Activated naive CD4-positive, alpha-beta T cell treated with anti-CD3 and anti-CD28 coated beads for 36 hours (primary cell): ENCODE measurements at regions of chr22 and their contacts with region 1.

Region 1: DNA sequence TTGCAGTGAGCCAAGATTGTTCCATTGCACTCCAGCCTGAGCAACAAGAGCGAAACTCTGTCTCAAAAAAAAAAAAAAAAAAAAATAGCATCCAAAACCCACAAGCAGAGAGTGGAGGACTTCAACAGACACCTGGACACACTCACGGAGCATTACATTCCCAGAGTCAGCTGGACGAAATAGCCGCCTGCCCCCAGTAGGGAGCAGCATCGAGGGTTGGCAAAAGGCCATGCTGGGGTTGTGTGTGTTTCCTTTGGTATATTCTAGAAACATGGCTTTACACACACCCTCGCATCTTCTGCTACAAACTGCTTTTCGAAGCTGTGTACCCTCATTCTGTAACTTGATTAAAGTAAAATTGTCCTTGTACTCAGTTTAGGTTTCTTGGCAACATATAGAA is 5.3 kb downstream of the ADA2 start:
- DNase-seq: peak; percentile 73
- H3K4me3 Mint-ChIP-seq: no peak overlapping the region
- H3K27ac Mint-ChIP-seq: no peak overlapping the region
- H3K4me1 Mint-ChIP-seq: peaks cover 48% of the 10 kb centered on the region
- H3K27me3 Mint-ChIP-seq: no peaks in the 10 kb centered on the region

Region 2: DNA sequence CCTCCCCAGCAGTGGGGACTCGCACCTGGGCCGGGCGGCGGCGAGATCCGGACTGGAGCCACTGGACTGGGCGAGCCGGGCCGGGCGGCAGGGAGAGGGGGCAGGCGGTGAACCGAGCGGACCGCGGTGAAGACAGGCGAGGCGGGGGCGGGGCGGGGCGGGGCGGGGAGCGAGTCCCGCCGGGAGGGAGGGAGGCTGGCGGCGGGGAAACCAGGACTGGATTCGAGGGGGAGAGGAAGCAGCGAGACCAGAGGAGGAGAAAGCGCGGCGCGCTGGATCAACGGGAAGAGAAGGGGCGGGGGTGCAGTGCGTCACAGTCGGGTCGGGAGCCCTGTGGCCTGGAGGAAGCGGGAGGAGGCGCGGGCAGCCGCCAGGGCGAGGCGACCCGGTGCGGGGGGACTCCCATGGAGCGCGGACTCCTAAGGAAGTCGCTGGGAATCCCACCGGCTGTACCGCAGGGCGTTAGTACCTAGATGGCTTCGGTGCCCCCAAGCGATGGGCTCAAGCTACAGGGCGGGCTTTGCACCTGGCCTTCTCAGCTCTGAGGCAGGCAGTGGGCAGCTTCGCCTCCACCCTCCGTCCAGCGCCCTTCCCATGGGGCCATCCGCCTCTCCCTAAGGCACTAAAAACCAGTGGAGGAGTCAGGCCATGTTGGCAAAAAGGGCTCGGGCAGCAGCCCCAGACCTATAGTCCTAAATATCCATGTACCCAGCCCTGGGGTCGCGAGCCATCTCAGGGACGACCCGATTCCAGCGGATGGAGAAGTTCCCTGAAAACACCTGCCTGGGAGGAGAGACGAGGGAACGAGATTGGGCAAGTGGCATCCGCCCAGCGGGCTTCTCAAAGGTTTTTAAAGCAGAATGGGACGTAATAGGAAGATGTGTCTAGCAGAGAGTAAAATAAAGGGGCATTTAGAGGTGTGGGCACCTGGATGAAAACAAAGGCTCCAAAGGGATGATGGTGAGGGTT is 92.5 kb before region 1 on chr22 and contains the start of gene TMEM121B:
- CTCF ChIA-PET with region 1: no interaction called
- intact Hi-C with region 1: loop called (anchors 5 kb)
- DNase-seq: peak; percentile 54
- H3K4me3 Mint-ChIP-seq: peak within 1 kb of the TSS; percentile 62
- H3K27ac Mint-ChIP-seq: no peak within 1 kb of the TSS
- H3K4me1 Mint-ChIP-seq: peaks cover 38% of the 10 kb centered on the region
- H3K27me3 Mint-ChIP-seq: peaks cover 11% of the 10 kb centered on the region
- total RNA-seq, gene TMEM121B: 0.19 to 0.22 TPM

Region 3: GRCh38 chr22:17158568-17159503 is 55.1 kb before region 1 on chr22 and contains the start of gene HDHD5:
- CTCF ChIA-PET with region 1: interaction called, 4 read pairs
- intact Hi-C with region 1: loop called (anchors 1 kb)
- DNase-seq: peak; percentile 90
- H3K4me3 Mint-ChIP-seq: peak within 1 kb of the TSS; percentile 84
- H3K27ac Mint-ChIP-seq: peak within 1 kb of the TSS; percentile 78
- H3K4me1 Mint-ChIP-seq: peaks cover 38% of the 10 kb centered on the region
- H3K27me3 Mint-ChIP-seq: no peaks in the 10 kb centered on the region
- total RNA-seq, gene HDHD5: 40.1 to 43.7 TPM

Region 4: GRCh38 chr22:17243524-17243923 is 29.5 kb after region 1 on chr22:
- CTCF ChIA-PET with region 1: no interaction called
- intact Hi-C with region 1: loop called (anchors 2 kb)
- DNase-seq: peak; percentile 43
- H3K4me3 Mint-ChIP-seq: no peak overlapping the region
- H3K27ac Mint-ChIP-seq: peak overlapping the region; percentile 61
- H3K4me1 Mint-ChIP-seq: peaks cover 10% of the 10 kb centered on the region
- H3K27me3 Mint-ChIP-seq: no peaks in the 10 kb centered on the region

Region 5: DNA sequence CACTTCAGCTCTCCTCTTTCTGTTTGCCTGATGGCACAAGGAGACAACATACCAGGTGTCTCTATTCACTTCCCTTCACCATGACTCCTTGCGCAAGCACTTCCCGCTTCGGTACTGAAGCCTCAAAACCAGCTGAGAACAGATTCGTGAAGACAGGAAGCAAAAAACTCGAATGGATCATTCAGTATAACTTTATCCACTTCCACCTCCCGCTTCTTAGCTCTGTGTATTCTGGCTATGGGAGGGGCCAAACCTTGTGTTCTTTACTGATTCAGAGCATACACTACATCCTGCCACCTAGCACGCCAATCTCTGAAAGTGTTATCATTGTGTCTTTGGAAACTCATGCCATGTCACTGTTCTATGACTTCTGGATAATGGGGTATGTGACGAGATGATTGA is 67.5 kb after region 1 on chr22:
- CTCF ChIA-PET with region 1: no interaction called
- intact Hi-C with region 1: loop called (anchors 1 kb)
- DNase-seq: peak; percentile 71
- H3K4me3 Mint-ChIP-seq: peak overlapping the region; percentile 38
- H3K27ac Mint-ChIP-seq: peak overlapping the region; percentile 79
- H3K4me1 Mint-ChIP-seq: peaks cover 15% of the 10 kb centered on the region
- H3K27me3 Mint-ChIP-seq: no peaks in the 10 kb centered on the region

Region 6: DNA sequence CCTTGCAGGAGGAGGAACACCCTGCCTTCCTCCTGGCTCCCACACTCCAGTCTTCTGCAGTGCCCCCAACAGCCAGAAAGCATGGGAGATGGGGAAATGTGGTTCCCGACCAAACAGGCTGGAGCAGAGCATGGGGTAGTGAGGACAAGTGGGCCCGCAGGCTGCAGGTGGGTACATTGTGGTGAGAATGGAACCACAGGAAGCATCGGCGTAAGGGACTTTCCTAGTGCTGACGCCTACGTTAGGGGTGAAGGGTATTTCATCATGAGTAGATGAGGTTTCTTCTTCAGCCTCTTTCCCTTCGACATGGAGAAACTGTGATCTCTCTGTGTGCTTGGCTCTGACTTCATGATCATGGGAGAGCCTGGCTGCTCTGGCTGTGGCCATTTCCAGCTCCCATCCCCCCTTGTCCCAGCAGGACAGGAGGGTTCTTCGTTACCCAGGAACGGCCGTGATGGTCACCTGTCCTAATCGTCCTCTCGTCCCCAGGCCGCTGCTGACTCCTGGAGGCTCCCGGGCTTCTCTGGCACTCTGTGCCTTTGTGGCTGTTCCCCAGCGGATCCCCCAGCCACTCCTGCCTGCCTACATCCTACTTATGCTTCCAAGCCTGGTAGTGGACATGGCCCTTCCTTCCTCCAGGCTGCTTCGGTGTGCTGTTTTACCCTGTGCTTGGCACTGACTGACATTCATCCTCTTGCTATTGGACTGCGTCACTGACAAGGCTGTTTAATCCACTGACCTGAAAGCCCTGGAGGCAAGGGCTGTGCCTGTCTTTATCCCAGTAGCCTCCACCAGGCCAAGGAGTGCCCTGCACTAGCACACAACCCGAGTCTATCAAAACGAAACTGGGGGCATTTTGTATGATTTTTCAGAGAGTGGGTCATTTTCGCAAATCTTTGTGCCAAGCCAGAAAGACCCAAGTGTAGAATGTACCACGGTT is 90.1 kb after region 1 on chr22:
- CTCF ChIA-PET with region 1: no interaction called
- intact Hi-C with region 1: loop called (anchors 5 kb)
- DNase-seq: peak; percentile 76
- H3K4me3 Mint-ChIP-seq: no peak overlapping the region
- H3K27ac Mint-ChIP-seq: peak overlapping the region; percentile 76
- H3K4me1 Mint-ChIP-seq: peaks cover 21% of the 10 kb centered on the region
- H3K27me3 Mint-ChIP-seq: no peaks in the 10 kb centered on the region

Region 7: DNA sequence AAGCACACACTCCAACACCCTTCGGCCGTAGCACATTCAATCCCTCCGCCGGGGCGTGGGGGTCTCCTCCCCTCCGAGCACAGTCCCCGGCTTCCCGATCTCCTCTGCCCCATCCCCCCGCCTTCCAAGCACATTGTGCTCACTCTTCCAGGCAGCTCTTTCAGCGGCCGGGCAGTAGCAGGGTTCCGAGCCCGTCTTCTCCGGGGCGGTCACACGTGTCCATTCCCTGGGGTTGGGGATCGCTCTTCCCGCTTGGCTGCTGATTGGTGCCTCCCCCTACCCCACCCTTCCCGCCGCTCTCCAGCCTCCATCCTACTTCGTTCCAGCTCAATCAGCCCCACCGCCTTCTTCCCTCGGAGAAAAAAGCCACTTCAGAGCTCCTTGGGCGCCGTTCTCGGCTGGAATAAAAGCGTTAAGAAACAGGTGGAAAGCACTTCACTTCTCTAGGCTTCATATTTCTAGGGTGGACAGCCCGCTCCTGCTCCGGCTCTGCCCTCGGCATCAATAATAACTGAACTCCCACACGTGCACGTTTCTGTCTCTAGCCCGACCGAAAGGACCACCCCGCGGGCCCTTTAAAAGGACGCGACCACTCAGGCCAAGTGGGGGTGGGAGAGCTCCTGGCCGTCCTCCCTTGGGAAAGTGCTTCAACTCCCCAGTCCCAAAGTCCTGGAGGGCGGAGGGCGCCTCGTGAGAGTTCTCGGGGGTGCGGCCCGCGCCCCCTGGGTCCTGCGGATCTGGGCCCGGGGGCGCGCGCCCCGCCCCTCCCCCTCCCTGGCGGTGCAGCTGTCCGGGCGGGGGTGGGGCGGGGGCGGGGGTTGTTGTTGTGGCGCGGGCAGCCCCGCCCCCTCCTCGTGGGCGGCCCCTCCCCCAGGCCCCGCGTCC is 154.8 kb after region 1 on chr22:
- CTCF ChIA-PET with region 1: no interaction called
- intact Hi-C with region 1: loop called (anchors 5 kb)
- DNase-seq: peak; percentile 8
- H3K4me3 Mint-ChIP-seq: peak overlapping the region; percentile 66
- H3K27ac Mint-ChIP-seq: no peak overlapping the region
- H3K4me1 Mint-ChIP-seq: peaks cover 22% of the 10 kb centered on the region
- H3K27me3 Mint-ChIP-seq: peaks cover 44% of the 10 kb centered on the region